HepG2 (cell line): ENCODE measurements at regions of chr3 and their contacts with region 1.

Region 1: DNA sequence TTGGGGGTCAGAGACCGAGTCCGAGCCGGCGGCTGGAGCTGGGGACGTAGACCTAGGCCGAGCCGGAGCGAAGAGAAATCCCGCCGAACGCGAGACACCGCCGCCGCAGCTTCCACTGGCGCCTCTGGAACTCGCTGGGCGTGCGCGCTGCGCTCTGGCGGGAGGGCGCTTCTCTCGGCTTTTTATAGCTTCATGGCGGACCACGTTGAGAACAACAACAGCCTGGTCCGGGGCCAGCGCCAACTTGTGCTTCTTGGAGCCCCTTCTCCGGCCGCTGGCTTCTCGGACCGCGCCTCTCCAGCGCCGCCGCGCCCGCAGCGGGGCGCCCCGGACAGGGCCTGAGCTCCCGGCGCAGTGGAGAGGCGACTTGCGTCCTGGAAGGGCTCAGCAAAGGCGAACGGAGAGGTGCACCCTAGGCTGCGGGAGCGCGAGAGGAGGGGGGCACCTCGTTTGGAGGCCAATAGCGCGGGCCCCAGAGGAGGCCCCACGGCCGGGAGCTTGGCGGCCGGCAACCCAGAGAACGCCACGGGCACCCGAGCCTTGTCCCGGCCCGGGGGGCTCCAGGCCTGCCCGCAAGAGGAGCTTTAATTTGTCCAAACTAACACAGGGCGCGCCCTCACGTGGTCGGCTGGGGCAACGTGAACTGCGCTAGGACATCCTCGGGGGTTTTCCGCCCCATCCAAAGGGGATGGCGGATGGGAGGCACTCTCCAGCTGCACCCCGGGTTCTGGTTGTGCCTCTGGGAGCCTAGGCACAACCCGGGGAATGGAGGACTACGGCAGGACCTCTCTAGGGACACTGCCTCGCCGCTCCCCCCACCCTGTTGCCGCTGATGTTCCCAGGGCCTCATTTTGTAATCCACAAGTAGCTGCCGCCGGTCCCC is 37.7 kb downstream of the HMCES start:
- DNase-seq: peak; percentile 68
- ATAC-seq: peak; percentile 24
- H3K4me3 ChIP-seq: peak overlapping the region; percentile 92 to 98 (median 95)
- H3K27ac ChIP-seq: peak overlapping the region; percentile 85
- H3K4me1 ChIP-seq: peaks cover 23% of the 10 kb centered on the region
- H3K27me3 ChIP-seq: no peaks in the 10 kb centered on the region; a peak in 1 of 5 replicates
- CTCF ChIP-seq: peak; percentile 78
- EP300 ChIP-seq: no peak
- POLR2A ChIP-seq: peak; percentile 99 to 100
- RAD21 ChIP-seq: 0 out of 2 replicates have a peak, but pooled peaks have one; percentile 13

Region 2: DNA sequence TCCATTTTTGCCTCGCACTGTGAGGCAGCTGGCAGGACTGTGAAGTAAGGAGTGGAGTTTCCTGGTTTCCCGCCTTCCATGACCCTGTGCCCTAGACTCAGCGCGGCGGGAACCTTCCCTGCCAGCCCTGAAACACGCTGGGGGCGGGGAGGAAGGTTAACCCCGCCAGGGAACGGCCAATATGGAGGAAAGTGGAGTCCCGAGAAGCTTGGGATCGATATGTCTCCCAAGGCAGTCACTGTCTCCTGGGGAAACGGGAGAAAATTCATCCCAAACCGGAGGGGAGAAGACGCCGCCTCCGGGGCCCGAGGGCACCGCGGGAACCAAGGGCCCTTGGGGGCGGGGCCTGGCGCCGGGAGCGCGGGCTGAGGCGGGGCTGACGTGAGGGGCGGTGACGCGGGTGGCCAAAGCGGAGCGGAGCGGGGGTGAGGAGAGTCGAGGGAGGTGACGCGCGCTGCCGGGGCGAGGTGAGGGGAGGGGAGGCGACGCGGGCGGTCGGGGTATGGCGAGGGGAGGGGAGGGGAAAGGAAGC is 37.9 kb before region 1 on chr3 and contains the start of gene HMCES:
- CTCF ChIA-PET with region 1: no interaction called
- POLR2A ChIA-PET with region 1: interaction called, 29 read pairs
- in situ Hi-C with region 1: no loop called
- intact Hi-C with region 1: loop called (anchors 2 kb)
- DNase-seq: peak; percentile 80
- ATAC-seq: peak; percentile 88
- H3K4me3 ChIP-seq: peak within 1 kb of the TSS; percentile 72 to 98 (median 78)
- H3K27ac ChIP-seq: peak within 1 kb of the TSS; percentile 90
- H3K4me1 ChIP-seq: peaks cover 44% of the 10 kb centered on the region
- H3K27me3 ChIP-seq: no peaks in the 10 kb centered on the region; a peak in 1 of 5 replicates
- CTCF ChIP-seq: peak; percentile 12; the same call in 1 of the 2 replicates
- EP300 ChIP-seq: no peak
- POLR2A ChIP-seq: peak in 1 of 2 experiments; percentile 70; a peak in 1 of 4 replicates
- RAD21 ChIP-seq: no peak
- total RNA-seq, gene HMCES: 37.5 and 52.4 TPM in 2 replicates

Region 3: GRCh38 chr3:129327510-129327909 is 11.1 kb after region 1 on chr3:
- CTCF ChIA-PET with region 1: no interaction called
- POLR2A ChIA-PET with region 1: interaction called, 33 read pairs
- in situ Hi-C with region 1: no loop called
- intact Hi-C with region 1: no loop called
- DNase-seq: no peak
- ATAC-seq: no peak
- H3K4me3 ChIP-seq: no peak overlapping the region
- H3K27ac ChIP-seq: no peak overlapping the region
- H3K4me1 ChIP-seq: peaks cover 78% of the 10 kb centered on the region
- H3K27me3 ChIP-seq: peaks cover 0 to 11% of the 10 kb centered on the region in 2 experiments; a peak in 2 of 5 replicates
- CTCF ChIP-seq: no peak
- EP300 ChIP-seq: no peak
- POLR2A ChIP-seq: no peak
- RAD21 ChIP-seq: no peak

Region 4: DNA sequence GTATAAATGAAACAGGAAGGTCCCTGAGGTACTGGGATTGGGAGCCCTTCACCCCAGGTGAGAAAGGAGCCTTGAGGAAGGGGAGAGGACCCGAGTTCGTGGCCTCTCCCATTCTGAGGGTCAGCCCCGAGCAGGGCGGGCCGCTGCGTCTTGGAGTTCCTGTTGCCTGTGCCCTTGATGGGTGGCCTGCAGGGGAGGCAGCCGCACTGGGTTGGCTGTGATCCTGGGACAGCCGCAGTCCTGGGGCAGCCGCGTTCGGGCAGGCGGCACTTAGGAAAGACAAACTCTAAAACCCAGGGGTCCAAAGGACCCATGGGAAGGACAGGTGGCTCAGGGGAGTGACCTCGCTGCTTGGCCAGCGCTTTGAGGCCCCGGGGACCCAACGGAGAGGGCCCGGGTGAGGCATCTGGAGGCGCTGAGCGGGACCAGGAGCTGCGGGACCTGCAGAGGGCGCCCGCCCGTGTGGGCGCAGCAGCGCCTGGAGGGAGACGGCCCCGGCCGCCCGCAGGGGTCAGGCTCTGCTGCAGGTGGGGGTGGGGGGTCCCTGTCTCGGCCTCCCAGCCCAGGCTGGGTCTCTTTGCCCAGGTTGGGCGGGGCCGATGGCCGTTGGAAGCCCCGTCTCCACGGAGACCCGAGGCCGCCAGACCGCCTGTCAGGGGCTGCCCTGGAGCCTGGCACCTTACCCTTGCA is 27.4 kb after region 1 on chr3:
- CTCF ChIA-PET with region 1: no interaction called
- POLR2A ChIA-PET with region 1: no interaction called
- in situ Hi-C with region 1: no loop called
- intact Hi-C with region 1: no loop called
- DNase-seq: no peak
- ATAC-seq: peak; percentile 88
- H3K4me3 ChIP-seq: peak overlapping the region; percentile 15 to 66 (median 55); a peak in 5 of 6 replicates
- H3K27ac ChIP-seq: no peak overlapping the region
- H3K4me1 ChIP-seq: peaks cover 66% of the 10 kb centered on the region
- H3K27me3 ChIP-seq: peaks cover 0 to 24% of the 10 kb centered on the region in 2 experiments; a peak in 2 of 5 replicates
- CTCF ChIP-seq: peak; percentile 84
- EP300 ChIP-seq: no peak
- POLR2A ChIP-seq: no peak
- RAD21 ChIP-seq: peak; percentile 58; the same call in 1 of the 2 replicates